ENCODE measurements at regions of chr19 and their contacts with region 1.

Region 1: DNA sequence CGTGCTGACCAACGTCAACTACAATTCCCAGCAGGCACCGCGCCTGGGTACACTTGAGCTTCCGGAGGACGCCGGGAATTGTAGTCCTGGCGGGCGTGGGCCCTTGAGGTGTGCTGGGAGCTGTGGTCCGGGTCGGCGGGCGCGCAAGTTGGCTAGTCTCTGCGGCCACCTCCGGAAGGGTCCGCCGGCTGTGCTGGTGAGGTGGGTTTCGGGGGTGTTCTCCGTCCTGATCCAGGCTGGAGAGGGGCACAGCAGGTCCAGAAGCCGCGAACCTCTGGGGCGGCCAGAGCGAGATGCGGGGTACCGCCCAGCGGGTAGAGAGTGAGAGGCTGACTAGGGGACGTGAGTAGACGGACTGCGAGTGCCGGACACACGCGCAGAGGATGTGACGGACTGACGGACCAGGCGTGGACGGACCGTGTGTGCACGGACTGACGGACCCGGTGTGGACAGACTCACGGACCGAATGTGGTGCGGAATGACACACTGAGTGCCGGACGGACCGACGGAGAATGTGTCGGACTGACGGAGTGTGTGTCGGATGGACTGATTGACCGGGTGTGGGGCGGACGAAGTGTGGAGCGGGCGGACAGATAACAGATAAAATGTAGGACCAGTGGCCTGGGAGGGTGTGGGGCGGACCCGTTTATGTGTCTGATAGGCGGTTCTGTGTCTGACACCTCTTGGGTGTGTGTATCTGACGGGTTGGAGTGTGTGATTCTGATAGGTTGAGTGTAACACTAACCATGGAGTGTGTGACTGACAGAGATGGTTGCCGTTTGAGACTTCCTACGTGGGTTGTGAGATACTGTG is at the start of gene ZSCAN22:
- DNase-seq: peak; percentile 98
- H3K4me3 Mint-ChIP-seq: no peak within 1 kb of the TSS
- H3K27ac Mint-ChIP-seq: no peak within 1 kb of the TSS
- H3K4me1 Mint-ChIP-seq: peaks cover 9% of the 10 kb centered on the region
- H3K27me3 Mint-ChIP-seq: no peaks in the 10 kb centered on the region
- CTCF ChIP-seq: no peak
- total RNA-seq, gene ZSCAN22: 3.8 and 4.7 TPM in 2 replicates

Region 2: DNA sequence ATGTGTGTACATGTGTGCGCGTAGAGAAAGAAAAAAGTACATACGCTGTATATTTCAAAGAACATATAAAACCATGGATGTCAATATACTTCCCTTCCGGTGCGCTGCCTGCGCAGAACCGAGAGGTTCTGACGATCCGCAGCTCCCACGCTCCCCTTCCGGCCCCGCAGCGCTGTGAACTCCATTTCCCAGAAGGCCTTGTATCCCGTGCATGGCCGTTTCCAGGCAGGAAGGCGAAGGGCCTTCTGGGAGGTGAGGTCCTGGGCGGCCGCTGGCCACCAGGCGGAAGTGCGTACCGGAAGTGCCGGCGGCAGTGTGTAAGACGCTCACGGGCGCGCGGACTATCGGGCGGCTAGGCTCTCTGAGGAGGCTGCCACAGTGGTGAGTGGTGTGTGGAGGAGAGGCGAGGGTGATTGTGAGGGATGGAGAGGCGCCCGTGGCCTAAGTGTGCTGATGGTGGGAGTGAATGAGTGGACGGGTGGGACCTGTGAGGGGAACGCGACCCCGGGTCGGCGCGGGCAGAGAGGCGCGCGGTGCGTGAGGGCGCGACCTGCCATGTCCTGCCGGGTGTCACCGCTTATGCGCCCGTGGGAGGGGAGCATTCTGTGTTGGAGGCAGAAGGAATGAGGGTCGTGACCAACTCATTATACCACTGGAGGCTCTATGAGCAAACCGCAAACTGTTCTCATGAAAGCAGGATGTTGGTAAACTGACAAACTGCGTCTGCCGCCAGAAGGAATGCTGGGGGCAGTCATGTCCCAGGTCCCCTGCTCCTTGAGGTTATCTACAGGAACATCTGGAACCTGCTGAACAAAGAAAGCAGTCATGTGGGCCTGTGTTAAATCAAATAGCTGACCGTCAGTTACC is 21.8 kb before region 1 on chr19 and contains the start of gene ERVK3-1:
- CTCF ChIA-PET with region 1: interaction called, 3 read pairs
- POLR2A ChIA-PET with region 1: interaction called, 34 read pairs
- intact Hi-C with region 1: no loop called
- DNase-seq: peak; percentile 97
- H3K4me3 Mint-ChIP-seq: peak within 1 kb of the TSS; percentile 96
- H3K27ac Mint-ChIP-seq: peak within 1 kb of the TSS; percentile 98
- H3K4me1 Mint-ChIP-seq: peaks cover 10% of the 10 kb centered on the region
- H3K27me3 Mint-ChIP-seq: no peaks in the 10 kb centered on the region
- CTCF ChIP-seq: no peak
- total RNA-seq, gene ERVK3-1: 63.1 and 64.6 TPM in 2 replicates

Region 3: GRCh38 chr19:58346961-58347931 is 20.1 kb after region 1 on chr19:
- CTCF ChIA-PET with region 1: interaction called, 7 read pairs
- POLR2A ChIA-PET with region 1: interaction called, 15 read pairs
- intact Hi-C with region 1: no loop called
- DNase-seq: peak; percentile 50
- H3K4me3 Mint-ChIP-seq: peak overlapping the region; percentile 84
- H3K27ac Mint-ChIP-seq: peak overlapping the region; percentile 64
- H3K4me1 Mint-ChIP-seq: peaks cover 5% of the 10 kb centered on the region
- H3K27me3 Mint-ChIP-seq: no peaks in the 10 kb centered on the region
- CTCF ChIP-seq: no peak

Region 4: GRCh38 chr19:58380722-58381466 is 53.8 kb after region 1 on chr19 and contains the start of gene ZNF837:
- CTCF ChIA-PET with region 1: no interaction called
- POLR2A ChIA-PET with region 1: interaction called, 11 read pairs
- intact Hi-C with region 1: loop called (anchors 1 kb)
- DNase-seq: peak; percentile 100
- H3K4me3 Mint-ChIP-seq: peak within 1 kb of the TSS; percentile 94
- H3K27ac Mint-ChIP-seq: peak within 1 kb of the TSS; percentile 97
- H3K4me1 Mint-ChIP-seq: peaks cover 17% of the 10 kb centered on the region
- H3K27me3 Mint-ChIP-seq: no peaks in the 10 kb centered on the region
- CTCF ChIP-seq: no peak
- total RNA-seq, gene ZNF837: 1.5 and 1.7 TPM in 2 replicates

Region 5: GRCh38 chr19:58466760-58467589 is 139.9 kb after region 1 on chr19 and contains the start of gene ZNF324:
- CTCF ChIA-PET with region 1: no interaction called
- POLR2A ChIA-PET with region 1: no interaction called
- intact Hi-C with region 1: loop called (anchors 5 kb)
- DNase-seq: peak; percentile 98
- H3K4me3 Mint-ChIP-seq: peak within 1 kb of the TSS; percentile 82
- H3K27ac Mint-ChIP-seq: peak within 1 kb of the TSS; percentile 78
- H3K4me1 Mint-ChIP-seq: peaks cover 13% of the 10 kb centered on the region
- H3K27me3 Mint-ChIP-seq: no peaks in the 10 kb centered on the region
- CTCF ChIP-seq: no peak
- total RNA-seq, gene ZNF324: 6.5 and 7.9 TPM in 2 replicates

Measured in MCF 10A (cell line).